Breast epithelium (tissue), 4 donors: ENCODE measurements at regions of chr10 and their contacts with region 1.

Region 1: GRCh38 chr10:49734661-49735071 is 27.5 kb downstream of the OGDHL start:
- DNase-seq: peak in 1 of 2 donors; percentile 6
- H3K4me3 ChIP-seq: no peak overlapping the region
- H3K27ac ChIP-seq: no peak overlapping the region
- H3K4me1 ChIP-seq: no peaks in the 10 kb centered on the region
- H3K27me3 ChIP-seq: no peaks in the 10 kb centered on the region
- CTCF ChIP-seq: no peak
- POLR2A ChIP-seq: no peak

Region 2: DNA sequence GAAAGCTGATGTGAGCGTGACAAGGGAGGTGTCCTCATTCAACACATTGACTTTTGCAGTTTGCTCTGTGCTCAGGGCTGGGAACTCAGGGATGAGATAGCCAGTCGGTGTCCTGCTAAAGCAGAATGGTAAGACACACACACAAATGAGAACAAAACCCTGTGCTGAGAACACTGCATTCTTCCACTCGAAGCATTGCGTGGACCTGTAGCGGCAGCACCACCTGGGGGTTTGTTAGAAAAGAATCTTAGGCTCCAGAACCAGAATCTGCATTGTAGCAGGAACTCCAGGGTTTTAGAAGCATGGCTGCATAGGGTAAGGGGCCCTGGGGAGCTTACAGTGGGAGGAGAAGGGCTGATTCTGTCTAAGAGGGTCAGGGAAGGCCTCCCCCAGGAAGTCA is 49.0 kb after region 1 on chr10:
- intact Hi-C with region 1: loop called (anchors 2 kb)
- DNase-seq: no peak
- H3K4me3 ChIP-seq: no peak overlapping the region
- H3K27ac ChIP-seq: no peak overlapping the region
- H3K4me1 ChIP-seq: no peaks in the 10 kb centered on the region
- H3K27me3 ChIP-seq: peaks cover 0 to 2% of the 10 kb centered on the region in 2 donors
- CTCF ChIP-seq: no peak
- POLR2A ChIP-seq: no peak

Region 3: GRCh38 chr10:50336140-50336539 is 601.5 kb after region 1 on chr10:
- intact Hi-C with region 1: no loop called
- DNase-seq: no peak
- H3K4me3 ChIP-seq: no peak overlapping the region
- H3K27ac ChIP-seq: no peak overlapping the region
- H3K4me1 ChIP-seq: no peaks in the 10 kb centered on the region
- H3K27me3 ChIP-seq: no peaks in the 10 kb centered on the region
- CTCF ChIP-seq: no peak
- POLR2A ChIP-seq: no peak